ENCODE measurements at regions of chr1 and their contacts with region 1.

Region 1: GRCh38 chr1:58546520-58547308 is at the start of gene OMA1:
- DNase-seq: peak; percentile 97
- ATAC-seq: peak; percentile 93
- H3K4me3 Mint-ChIP-seq: peak within 1 kb of the TSS; percentile 86
- H3K27ac Mint-ChIP-seq: peak within 1 kb of the TSS; percentile 96
- H3K4me1 Mint-ChIP-seq: peaks cover 18% of the 10 kb centered on the region
- H3K27me3 Mint-ChIP-seq: peaks cover 1% of the 10 kb centered on the region
- total RNA-seq, gene OMA1: 8.8 to 11.6 TPM

Region 2: GRCh38 chr1:58249737-58250586 is 296.8 kb before region 1 on chr1:
- CTCF ChIA-PET with region 1: no interaction called
- POLR2A ChIA-PET with region 1: no interaction called
- intact Hi-C with region 1: loop called in 1 of 2 experiments (anchors 2 kb)
- DNase-seq: peak; percentile 32
- ATAC-seq: peak; percentile 58
- H3K4me3 Mint-ChIP-seq: peak overlapping the region; percentile 25
- H3K27ac Mint-ChIP-seq: no peak overlapping the region
- H3K4me1 Mint-ChIP-seq: peaks cover 9% of the 10 kb centered on the region
- H3K27me3 Mint-ChIP-seq: peaks cover 44% of the 10 kb centered on the region

Region 3: DNA sequence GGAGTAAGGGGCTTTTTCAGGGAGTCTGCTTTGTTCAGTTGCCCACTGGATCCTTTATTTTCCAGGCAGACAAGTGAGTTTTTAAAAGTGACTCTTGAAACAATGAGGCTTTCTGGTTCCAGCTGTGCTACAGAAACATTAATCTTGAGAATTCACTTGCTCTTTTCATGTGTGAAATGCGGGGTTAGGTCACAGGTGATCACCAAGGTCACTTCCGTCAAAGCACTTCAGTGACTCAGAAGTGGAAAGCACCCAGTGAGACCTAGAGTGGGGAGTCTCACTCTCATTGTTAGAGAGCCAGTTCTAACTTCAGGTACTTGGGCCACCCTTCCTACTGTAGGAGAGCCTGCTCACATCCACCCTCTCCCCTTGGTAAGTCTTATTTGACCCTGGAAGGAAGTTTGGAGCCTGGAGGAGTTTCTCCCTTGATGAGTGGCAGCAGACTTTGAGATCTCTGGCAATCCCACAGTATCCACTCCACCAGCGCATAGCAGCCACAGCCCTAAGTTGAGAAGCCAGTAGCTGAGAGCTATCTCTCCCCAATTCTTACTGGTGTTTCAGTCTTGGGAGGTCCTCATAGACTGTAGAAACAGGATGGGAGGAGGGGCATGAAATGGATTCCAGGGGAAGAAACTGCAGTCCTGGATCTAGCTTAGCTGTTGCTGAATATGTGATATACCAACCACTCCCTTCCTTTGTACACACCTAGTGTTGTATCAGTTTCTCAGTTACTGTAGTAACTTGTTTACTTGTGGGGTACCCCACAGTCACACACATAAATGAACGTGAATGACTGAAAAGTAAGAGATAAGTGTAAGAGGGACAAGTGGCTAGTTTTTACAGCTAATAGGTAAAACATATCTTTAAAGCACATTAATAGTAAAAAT is 27.2 kb after region 1 on chr1:
- CTCF ChIA-PET with region 1: interaction called, 7 read pairs
- POLR2A ChIA-PET with region 1: no interaction called
- intact Hi-C with region 1: loop called in 1 of 2 experiments (anchors 2 kb)
- DNase-seq: peak; percentile 70
- ATAC-seq: peak; percentile 97
- H3K4me3 Mint-ChIP-seq: no peak overlapping the region
- H3K27ac Mint-ChIP-seq: no peak overlapping the region
- H3K4me1 Mint-ChIP-seq: peaks cover 38% of the 10 kb centered on the region
- H3K27me3 Mint-ChIP-seq: peaks cover 65% of the 10 kb centered on the region

Region 4: GRCh38 chr1:58699011-58699762 is 152.5 kb after region 1 on chr1:
- CTCF ChIA-PET with region 1: no interaction called
- POLR2A ChIA-PET with region 1: interaction called, 7 read pairs
- intact Hi-C with region 1: loop called in 1 of 2 experiments (anchors 1 kb)
- DNase-seq: no peak
- ATAC-seq: peak; percentile 16
- H3K4me3 Mint-ChIP-seq: peak overlapping the region; percentile 85
- H3K27ac Mint-ChIP-seq: peak overlapping the region; percentile 94
- H3K4me1 Mint-ChIP-seq: peaks cover 11% of the 10 kb centered on the region
- H3K27me3 Mint-ChIP-seq: no peaks in the 10 kb centered on the region

Measured in activated CD4-positive, alpha-beta T cell treated with anti-CD3 and anti-CD28 coated beads for 36 hours (primary cell).